ENCODE measurements at regions of chr14 and their contacts with region 1.

Region 1: GRCh38 chr14:25904446-25904845 is 693.4 kb downstream of the NOVA1 start:
- DNase-seq: no peak
- H3K4me3 ChIP-seq: no peak overlapping the region
- H3K27ac ChIP-seq: no peak overlapping the region
- H3K4me1 ChIP-seq: no peaks in the 10 kb centered on the region
- CTCF ChIP-seq: no peak

Region 2: GRCh38 chr14:25821527-25821926 is 82.9 kb before region 1 on chr14:
- CTCF ChIA-PET with region 1: no interaction called
- POLR2A ChIA-PET with region 1: no interaction called
- intact Hi-C with region 1: no loop called
- DNase-seq: no peak
- H3K4me3 ChIP-seq: no peak overlapping the region
- H3K27ac ChIP-seq: no peak overlapping the region
- H3K4me1 ChIP-seq: no peaks in the 10 kb centered on the region
- CTCF ChIP-seq: no peak

Region 3: GRCh38 chr14:25929881-25930615 is 25.6 kb after region 1 on chr14:
- CTCF ChIA-PET with region 1: no interaction called
- POLR2A ChIA-PET with region 1: interaction called, 10 read pairs
- intact Hi-C with region 1: no loop called
- DNase-seq: no peak
- H3K4me3 ChIP-seq: no peak overlapping the region
- H3K27ac ChIP-seq: no peak overlapping the region
- H3K4me1 ChIP-seq: no peaks in the 10 kb centered on the region
- CTCF ChIP-seq: no peak

Measured in OCI-LY7 (cell line).